ENCODE measurements at regions of chrX and their contacts with region 1.

Region 1: DNA sequence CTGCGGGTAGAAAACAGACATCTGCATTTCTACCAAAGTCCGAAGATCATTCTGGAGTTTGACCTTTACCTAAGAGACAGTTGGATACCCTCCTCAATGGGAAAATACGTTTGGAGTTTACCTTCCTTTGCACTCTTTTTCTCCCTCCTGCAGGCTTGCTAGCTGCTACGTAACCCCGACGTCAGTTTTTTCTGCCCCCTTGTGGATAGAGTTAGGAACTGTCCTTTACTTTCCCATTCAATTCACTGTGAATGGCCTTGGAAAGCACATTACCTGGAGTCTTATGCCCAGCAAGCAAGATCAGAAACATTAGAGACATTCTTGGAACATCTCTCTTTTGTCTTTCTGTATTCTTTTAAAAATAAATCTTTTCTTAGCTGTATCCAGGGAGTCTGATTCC is 250.7 kb downstream of the NAP1L3 start:
- DNase-seq: no peak
- ATAC-seq: 0 out of 2 replicates have a peak, but pooled peaks have one; percentile 60
- H3K4me3 ChIP-seq: no peak overlapping the region
- H3K27ac ChIP-seq: no peak overlapping the region
- H3K4me1 ChIP-seq: no peaks in the 10 kb centered on the region
- H3K27me3 ChIP-seq: no peaks in the 10 kb centered on the region
- CTCF ChIP-seq: peak; percentile 64

Region 2: DNA sequence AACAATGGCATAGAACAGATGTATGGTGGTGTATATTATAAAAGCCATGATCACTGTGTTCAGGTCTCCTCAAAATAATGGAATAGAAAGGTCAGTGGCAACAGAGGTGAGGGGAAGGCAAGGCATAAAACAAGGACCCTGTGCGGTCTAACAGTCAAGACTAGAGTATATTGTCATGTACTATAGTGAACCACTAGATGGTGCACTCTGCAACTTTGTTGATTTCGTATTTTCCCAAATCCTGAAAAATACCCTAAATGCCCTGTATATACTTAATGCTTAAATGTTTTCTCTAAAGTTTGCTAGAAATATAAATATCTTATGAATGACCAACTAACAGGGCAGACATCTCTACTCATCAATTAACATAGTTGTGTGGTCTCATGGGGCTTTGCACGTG is 1190.5 kb before region 1 on chrX:
- CTCF ChIA-PET with region 1: no interaction called
- POLR2A ChIA-PET with region 1: no interaction called
- in situ Hi-C with region 1: no loop called
- intact Hi-C with region 1: loop called (anchors 5 kb)
- DNase-seq: no peak
- ATAC-seq: no peak
- H3K4me3 ChIP-seq: no peak overlapping the region
- H3K27ac ChIP-seq: no peak overlapping the region
- H3K4me1 ChIP-seq: no peaks in the 10 kb centered on the region
- H3K27me3 ChIP-seq: no peaks in the 10 kb centered on the region
- CTCF ChIP-seq: peak; percentile 45; the same call in 1 of the 2 replicates